ENCODE measurements at regions of chr19 and their contacts with region 1.

Region 1: DNA sequence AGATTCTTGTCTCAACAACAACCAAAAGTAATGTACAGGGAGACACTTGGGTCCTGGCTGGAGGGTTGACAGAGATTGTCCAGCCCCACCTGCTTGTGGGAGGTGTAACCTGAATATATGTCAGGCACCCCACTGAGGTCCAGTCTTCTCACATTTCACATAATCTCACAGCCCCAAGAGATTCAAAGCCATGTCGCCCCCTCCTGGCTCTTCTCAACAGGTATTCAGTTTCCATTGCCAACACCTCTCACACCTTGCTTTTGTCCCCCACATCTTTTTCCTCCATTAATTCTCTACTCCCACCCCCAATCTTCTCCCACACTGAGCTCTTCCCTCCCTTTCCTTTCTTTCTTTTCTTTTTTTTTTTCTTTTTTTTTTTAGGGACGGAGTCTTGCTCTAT is 11.2 kb downstream of the UNC13A start:
- DNase-seq: no peak
- H3K4me3 ChIP-seq: no peak overlapping the region
- H3K4me3 Mint-ChIP-seq: no peak overlapping the region
- H3K27ac Mint-ChIP-seq: no peak overlapping the region
- H3K4me1 ChIP-seq: no peaks in the 10 kb centered on the region
- H3K4me1 Mint-ChIP-seq: no peaks in the 10 kb centered on the region
- H3K27me3 ChIP-seq: no peaks in the 10 kb centered on the region
- H3K27me3 Mint-ChIP-seq: peaks cover 18% of the 10 kb centered on the region
- CTCF ChIP-seq: peak; percentile 15 to 27

Region 2: DNA sequence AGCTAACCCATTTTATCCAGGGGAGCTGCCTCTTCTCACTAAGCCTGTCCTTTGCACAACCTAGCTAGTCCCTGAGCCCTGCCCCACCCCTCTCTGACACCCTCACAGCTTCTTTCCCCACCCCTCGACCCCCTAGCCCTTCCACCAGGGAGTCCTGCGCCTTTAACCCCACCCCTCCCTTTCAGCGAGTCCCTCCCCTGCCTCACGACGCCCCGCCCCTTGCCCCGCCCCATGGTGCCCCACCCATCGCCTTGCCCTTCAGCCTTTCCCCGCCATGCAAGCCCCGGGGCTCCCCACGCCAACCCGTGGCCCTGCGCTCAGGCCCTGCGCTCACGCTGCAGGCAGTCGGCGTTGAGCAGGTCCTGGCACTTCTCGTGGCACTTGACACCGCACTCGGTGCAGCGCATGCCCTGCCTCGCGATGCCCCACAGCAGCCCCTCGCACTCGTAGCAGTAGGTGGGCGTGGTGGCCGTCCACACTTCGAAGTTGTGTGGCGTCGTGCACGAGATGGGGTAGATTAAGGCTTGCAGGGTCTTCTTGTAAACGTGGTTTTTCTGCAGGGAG is 28.8 kb before region 1 on chr19:
- CTCF ChIA-PET with region 1: no interaction called
- POLR2A ChIA-PET with region 1: no interaction called
- intact Hi-C with region 1: loop called (anchors 1 kb)
- DNase-seq: no peak
- H3K4me3 ChIP-seq: no peak overlapping the region
- H3K4me3 Mint-ChIP-seq: no peak overlapping the region
- H3K27ac Mint-ChIP-seq: no peak overlapping the region
- H3K4me1 ChIP-seq: no peaks in the 10 kb centered on the region
- H3K4me1 Mint-ChIP-seq: no peaks in the 10 kb centered on the region
- H3K27me3 ChIP-seq: no peaks in the 10 kb centered on the region
- H3K27me3 Mint-ChIP-seq: peaks cover 9% of the 10 kb centered on the region
- CTCF ChIP-seq: no peak

Region 3: GRCh38 chr19:17766543-17767131 is 89.6 kb after region 1 on chr19:
- CTCF ChIA-PET with region 1: no interaction called
- POLR2A ChIA-PET with region 1: no interaction called
- intact Hi-C with region 1: loop called (anchors 5 kb)
- DNase-seq: peak; percentile 86 to 88
- H3K4me3 ChIP-seq: peak overlapping the region; percentile 28
- H3K4me3 Mint-ChIP-seq: peak overlapping the region; percentile 73
- H3K27ac Mint-ChIP-seq: no peak overlapping the region
- H3K4me1 ChIP-seq: no peaks in the 10 kb centered on the region
- H3K4me1 Mint-ChIP-seq: no peaks in the 10 kb centered on the region
- H3K27me3 ChIP-seq: no peaks in the 10 kb centered on the region
- H3K27me3 Mint-ChIP-seq: no peaks in the 10 kb centered on the region
- CTCF ChIP-seq: peak; percentile 69 to 90

Measured in Caco-2 (cell line).